PC-9 (cell line): ENCODE measurements at regions of chr20 and their contacts with region 1.

Region 1: GRCh38 chr20:5749952-5750779 is at the start of gene SHLD1:
- DNase-seq: peak; percentile 62 to 77
- H3K4me3 ChIP-seq: peak within 1 kb of the TSS; percentile 71
- H3K27ac ChIP-seq: peak within 1 kb of the TSS; percentile 57
- H3K4me1 ChIP-seq: peaks cover 13% of the 10 kb centered on the region
- H3K27me3 ChIP-seq: no peaks in the 10 kb centered on the region
- CTCF ChIP-seq: no peak
- total RNA-seq, gene SHLD1: 4.8 and 5.9 TPM in 2 replicates

Region 2: DNA sequence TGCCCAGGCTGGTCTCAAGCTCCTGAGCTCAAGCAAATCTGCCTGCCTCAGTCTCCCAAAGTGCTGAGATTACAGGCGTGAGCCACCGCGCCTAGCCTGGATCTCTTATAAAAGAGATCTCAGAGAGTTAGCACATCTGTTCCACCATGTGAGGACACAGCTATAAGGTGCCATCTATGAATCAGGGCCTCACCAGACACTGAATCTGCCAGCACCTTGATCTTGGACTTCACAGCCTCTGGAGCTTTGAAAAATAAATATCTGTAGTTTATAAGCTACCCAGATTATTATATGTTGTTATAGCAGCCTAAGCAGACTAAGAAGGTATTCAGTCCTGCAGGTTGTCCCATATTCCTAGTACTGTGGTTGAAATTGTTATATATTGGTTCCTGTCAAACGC is 33.2 kb before region 1 on chr20:
- CTCF ChIA-PET with region 1: no interaction called
- POLR2A ChIA-PET with region 1: no interaction called
- intact Hi-C with region 1: no loop called
- DNase-seq: no peak
- H3K4me3 ChIP-seq: no peak overlapping the region
- H3K27ac ChIP-seq: no peak overlapping the region
- H3K4me1 ChIP-seq: peaks cover 29% of the 10 kb centered on the region
- H3K27me3 ChIP-seq: no peaks in the 10 kb centered on the region
- CTCF ChIP-seq: no peak

Region 3: GRCh38 chr20:5734602-5735001 is 15.6 kb before region 1 on chr20:
- CTCF ChIA-PET with region 1: interaction called, 13 read pairs
- POLR2A ChIA-PET with region 1: no interaction called
- intact Hi-C with region 1: no loop called
- DNase-seq: no peak
- H3K4me3 ChIP-seq: no peak overlapping the region
- H3K27ac ChIP-seq: no peak overlapping the region
- H3K4me1 ChIP-seq: peaks cover 6% of the 10 kb centered on the region; the same call in 1 of the 2 replicates
- H3K27me3 ChIP-seq: no peaks in the 10 kb centered on the region
- CTCF ChIP-seq: no peak

Region 4: GRCh38 chr20:5781798-5782750 is 31.9 kb after region 1 on chr20:
- CTCF ChIA-PET with region 1: interaction called, 17 read pairs
- POLR2A ChIA-PET with region 1: no interaction called
- intact Hi-C with region 1: no loop called
- DNase-seq: peak in 1 of 2 experiments; percentile 30
- H3K4me3 ChIP-seq: no peak overlapping the region
- H3K27ac ChIP-seq: no peak overlapping the region
- H3K4me1 ChIP-seq: peaks cover 35% of the 10 kb centered on the region
- H3K27me3 ChIP-seq: no peaks in the 10 kb centered on the region
- CTCF ChIP-seq: no peak